PC-3 (cell line): ENCODE measurements at regions of chr4 and their contacts with region 1.

Region 1: GRCh38 chr4:113781439-113782040 is 20.0 kb upstream of the CAMK2D start:
- DNase-seq: peak; percentile 63
- ATAC-seq: no peak
- H3K4me3 ChIP-seq: no peak overlapping the region
- H3K27ac ChIP-seq: no peak overlapping the region
- H3K4me1 ChIP-seq: peaks cover 18% of the 10 kb centered on the region
- H3K27me3 ChIP-seq: no peaks in the 10 kb centered on the region
- CTCF ChIP-seq: peak; percentile 72

Region 2: DNA sequence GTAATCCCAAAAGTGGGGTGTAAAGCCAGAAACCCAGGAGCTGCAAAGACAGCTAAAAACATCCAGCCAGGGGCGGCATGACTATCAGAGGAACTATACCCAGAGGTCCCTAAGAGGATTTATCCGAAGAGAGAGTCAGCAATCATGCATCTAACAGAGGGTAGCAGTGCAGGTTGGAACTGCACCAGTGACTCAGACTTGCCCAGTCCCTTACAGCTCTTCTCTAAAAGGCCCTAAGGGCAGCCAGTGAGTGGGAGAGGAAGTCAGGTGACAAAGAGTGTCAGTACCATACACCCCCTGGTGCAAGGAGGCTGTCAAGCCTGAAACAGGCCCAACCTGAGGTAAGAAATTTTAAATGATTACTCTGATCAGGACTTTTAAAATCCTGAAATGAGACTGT is 108.1 kb before region 1 on chr4:
- CTCF ChIA-PET with region 1: no interaction called
- POLR2A ChIA-PET with region 1: no interaction called
- intact Hi-C with region 1: no loop called
- DNase-seq: peak; percentile 53
- ATAC-seq: peak; percentile 63
- H3K4me3 ChIP-seq: no peak overlapping the region
- H3K27ac ChIP-seq: no peak overlapping the region
- H3K4me1 ChIP-seq: peaks cover 16% of the 10 kb centered on the region
- H3K27me3 ChIP-seq: no peaks in the 10 kb centered on the region
- CTCF ChIP-seq: no peak

Region 3: GRCh38 chr4:113893546-113893945 is 112.0 kb after region 1 on chr4:
- CTCF ChIA-PET with region 1: no interaction called
- POLR2A ChIA-PET with region 1: no interaction called
- intact Hi-C with region 1: loop called (anchors 5 kb)
- DNase-seq: peak; percentile 29
- ATAC-seq: no peak
- H3K4me3 ChIP-seq: no peak overlapping the region
- H3K27ac ChIP-seq: no peak overlapping the region
- H3K4me1 ChIP-seq: no peaks in the 10 kb centered on the region
- H3K27me3 ChIP-seq: no peaks in the 10 kb centered on the region
- CTCF ChIP-seq: peak; percentile 54

Region 4: DNA sequence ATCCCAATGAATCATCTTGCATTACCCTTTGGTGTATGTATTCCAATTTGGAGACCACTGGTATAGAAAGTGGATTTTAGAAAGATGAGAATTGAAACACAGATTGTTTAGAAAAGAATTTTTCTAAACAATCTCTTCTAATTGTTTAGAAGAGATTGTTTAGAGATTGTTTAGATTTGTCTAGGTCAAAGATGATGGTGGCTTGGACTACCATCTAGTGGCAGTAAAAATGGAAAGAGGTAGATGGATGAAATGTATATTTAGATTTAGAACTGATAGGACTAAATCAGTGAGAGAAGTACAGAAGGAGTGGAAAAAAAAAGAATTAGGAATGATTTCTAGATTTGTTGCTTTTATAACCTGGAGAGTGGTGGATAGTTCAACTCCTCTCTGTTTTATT is 127.3 kb after region 1 on chr4:
- CTCF ChIA-PET with region 1: no interaction called
- POLR2A ChIA-PET with region 1: no interaction called
- intact Hi-C with region 1: loop called (anchors 5 kb)
- DNase-seq: peak; percentile 6
- ATAC-seq: no peak; the same call in 1 of the 2 replicates
- H3K4me3 ChIP-seq: no peak overlapping the region
- H3K27ac ChIP-seq: no peak overlapping the region
- H3K4me1 ChIP-seq: no peaks in the 10 kb centered on the region
- H3K27me3 ChIP-seq: no peaks in the 10 kb centered on the region
- CTCF ChIP-seq: peak; percentile 49; the same call in 1 of the 2 replicates

Region 5: DNA sequence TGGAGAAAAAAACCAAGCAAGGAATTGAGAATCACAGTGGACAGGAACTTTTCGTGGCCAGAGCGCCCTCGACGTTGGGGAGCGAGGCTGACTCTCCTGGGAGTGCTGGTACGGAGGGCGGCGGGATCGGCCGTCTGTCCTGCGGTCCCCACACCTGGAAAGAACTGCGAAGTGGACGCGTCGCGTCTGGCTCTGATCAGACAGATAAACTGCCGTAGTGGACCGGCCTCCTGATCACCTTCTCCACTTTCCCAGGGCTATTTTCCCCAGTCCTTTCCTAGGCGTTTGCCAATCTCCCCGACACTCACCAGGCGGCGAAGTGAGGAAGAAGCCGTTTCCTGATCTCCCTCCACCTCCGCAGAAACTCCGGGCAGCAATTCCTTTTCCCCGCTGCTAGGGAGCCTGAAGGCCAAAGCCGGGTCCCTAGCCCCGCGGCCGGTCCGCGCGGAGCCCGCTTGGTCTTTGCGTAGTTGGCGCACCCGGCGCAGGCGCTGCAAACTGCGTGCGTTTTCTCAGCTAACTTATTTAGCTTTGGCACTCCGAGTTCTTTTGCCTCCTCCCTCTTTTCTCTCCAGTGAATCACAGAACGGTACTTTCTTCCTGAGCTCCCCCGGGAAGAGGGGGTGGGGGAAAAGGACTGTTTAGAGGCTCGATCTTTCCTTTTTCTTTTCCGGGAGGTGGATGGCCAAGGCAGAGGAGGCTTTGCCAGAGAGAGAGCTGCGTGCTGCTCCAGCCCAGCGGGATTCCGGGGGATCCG is 197.8 kb after region 1 on chr4 and contains the start of gene ARSJ:
- CTCF ChIA-PET with region 1: no interaction called
- POLR2A ChIA-PET with region 1: interaction called, 11 read pairs
- intact Hi-C with region 1: no loop called
- DNase-seq: peak; percentile 64
- ATAC-seq: peak; percentile 48
- H3K4me3 ChIP-seq: peak within 1 kb of the TSS; percentile 74
- H3K27ac ChIP-seq: peak within 1 kb of the TSS; percentile 73
- H3K4me1 ChIP-seq: peaks cover 19% of the 10 kb centered on the region
- H3K27me3 ChIP-seq: no peaks in the 10 kb centered on the region
- CTCF ChIP-seq: no peak
- total RNA-seq, gene ARSJ: 16.4 and 19.1 TPM in 2 replicates